Activated T-helper 1 cell treated with anti-CD3 and anti-CD28 coated beads, Interleukin-12 subunit alpha, Interleukin-12 subunit beta, Interleukin-2, Interleukin-4 antibody, amounts not matched to agents 30 ng/mL and 10 ng/mL and 1 ng/mL, durations not matched to agents 14 hours and 24 hours and 36 hours (primary cell): ENCODE measurements at regions of chrX and their contacts with region 1.

Region 1: DNA sequence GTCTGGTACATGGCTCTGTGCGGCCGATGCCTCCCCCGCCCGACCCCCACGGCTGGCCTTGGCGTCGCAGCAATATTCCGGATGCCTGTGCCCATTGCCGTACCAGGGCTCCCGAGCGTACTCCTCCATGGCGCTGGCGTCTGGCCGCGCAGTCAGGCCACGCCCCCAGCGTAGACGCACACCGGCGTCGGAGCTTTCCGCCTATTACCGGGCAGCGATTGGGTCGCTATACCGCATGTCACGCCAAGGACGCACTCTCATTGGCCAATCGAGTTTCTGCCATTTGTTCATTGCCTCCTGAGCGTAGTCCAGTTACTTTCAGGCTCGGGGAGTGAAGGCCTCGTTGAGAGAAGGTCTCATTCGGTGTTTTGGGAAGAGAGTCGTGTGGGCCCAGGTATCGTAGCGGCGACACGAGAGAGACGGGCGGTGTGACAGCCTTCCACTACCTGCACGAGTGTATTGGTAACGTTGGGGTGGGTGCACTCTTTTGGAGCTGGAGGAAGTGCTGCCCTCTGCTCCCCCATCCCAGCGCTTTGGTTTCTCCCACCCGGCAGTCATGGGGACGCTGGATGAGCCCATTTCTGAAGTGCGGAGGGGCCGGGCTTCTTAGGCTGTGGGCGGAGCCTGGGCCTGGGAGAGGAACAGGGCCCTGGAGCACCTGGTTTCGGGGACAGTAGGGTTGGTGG is at the starts of genes PQBP1 and TIMM17B:
- DNase-seq: peak; percentile 84
- H3K4me3 Mint-ChIP-seq: peak within 1 kb of the TSS; percentile 97
- H3K27ac Mint-ChIP-seq: peak within 1 kb of the TSS; percentile 100
- H3K4me1 Mint-ChIP-seq: peaks cover 8% of the 10 kb centered on the region
- H3K27me3 Mint-ChIP-seq: no peaks in the 10 kb centered on the region
- total RNA-seq, gene PQBP1: 112 and 119 TPM in 2 replicates
- total RNA-seq, gene TIMM17B: 72.2 and 72.3 TPM in 2 replicates

Region 2: DNA sequence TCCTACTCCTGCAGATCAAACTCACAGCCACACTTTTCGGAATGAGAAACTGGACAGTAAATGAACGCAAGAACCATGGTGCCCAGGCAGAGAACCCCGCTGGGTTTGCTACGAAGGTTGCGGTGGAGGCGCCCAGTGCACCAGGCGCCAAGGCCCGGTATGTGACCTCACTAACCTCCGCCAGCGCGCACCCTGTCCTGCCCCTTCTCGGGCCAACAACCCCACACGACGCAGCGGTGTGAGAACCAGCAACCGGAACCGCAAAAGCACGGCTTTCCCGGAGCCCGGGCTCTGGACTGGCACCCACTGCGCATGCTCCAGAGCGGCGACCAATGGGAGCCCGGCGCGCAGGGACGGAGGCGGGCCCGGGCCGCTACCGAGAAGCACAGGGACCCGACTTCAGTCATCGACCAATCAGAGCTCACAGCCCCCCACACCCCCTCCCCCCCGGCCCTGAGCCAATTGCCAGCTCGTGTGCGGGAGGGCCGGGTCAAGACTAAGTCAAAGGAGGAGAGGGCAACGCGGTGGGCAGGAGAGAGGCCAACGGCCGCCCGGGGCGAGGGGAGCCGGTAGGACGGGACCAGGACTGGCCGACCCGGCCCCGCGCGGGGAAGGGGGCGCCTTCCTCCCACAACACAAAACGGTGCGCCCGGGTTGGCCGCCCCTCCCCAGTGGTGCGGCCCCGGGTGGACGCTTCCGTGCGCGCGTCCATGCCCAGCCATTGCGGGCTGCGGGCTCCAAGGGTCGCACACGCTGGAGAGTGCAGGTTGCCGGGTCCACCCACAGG is 221.5 kb before region 1 on chrX:
- intact Hi-C with region 1: loop called (anchors 1 kb)
- DNase-seq: peak; percentile 87
- H3K4me3 Mint-ChIP-seq: peak overlapping the region; percentile 86
- H3K27ac Mint-ChIP-seq: peak overlapping the region; percentile 88
- H3K4me1 Mint-ChIP-seq: peaks cover 20% of the 10 kb centered on the region
- H3K27me3 Mint-ChIP-seq: no peaks in the 10 kb centered on the region

Region 3: DNA sequence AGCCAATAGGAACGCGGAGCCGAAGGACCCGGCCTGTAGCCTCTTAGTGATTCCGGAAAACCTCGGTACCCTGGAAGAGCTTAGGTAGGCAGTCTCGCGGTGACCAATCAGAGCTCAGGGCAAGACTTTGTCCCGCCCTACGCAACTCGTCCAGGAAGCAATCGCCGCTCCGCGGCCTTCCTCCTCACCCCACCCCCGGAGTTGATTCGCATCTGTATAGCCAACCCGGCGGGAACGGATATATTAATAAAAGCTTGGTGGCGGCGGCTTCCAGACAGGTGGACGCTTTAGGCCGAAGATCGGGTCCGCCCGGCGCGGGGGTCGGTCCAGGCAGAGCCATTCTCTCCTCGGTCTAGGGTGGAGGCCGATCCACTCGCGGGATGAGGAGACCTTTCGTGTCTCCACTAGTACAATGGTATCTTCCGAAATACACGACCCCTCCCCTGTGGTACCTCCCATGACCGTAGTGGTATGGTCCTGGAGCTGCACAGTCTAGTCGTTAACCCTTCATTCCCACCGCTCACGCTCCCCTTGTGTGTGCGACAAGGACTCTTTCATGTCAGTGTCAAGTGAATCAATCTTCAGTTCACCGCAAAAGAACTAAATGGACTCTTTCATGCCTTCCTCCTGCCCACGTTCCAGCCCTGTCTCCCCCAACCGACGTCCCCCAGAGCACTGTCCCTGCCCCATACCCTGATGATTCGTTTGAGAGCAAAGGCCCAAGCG is 160.4 kb before region 1 on chrX:
- intact Hi-C with region 1: loop called (anchors 1 kb)
- DNase-seq: peak; percentile 85
- H3K4me3 Mint-ChIP-seq: peak overlapping the region; percentile 98
- H3K27ac Mint-ChIP-seq: peak overlapping the region; percentile 98
- H3K4me1 Mint-ChIP-seq: peaks cover 23% of the 10 kb centered on the region
- H3K27me3 Mint-ChIP-seq: no peaks in the 10 kb centered on the region

Region 4: DNA sequence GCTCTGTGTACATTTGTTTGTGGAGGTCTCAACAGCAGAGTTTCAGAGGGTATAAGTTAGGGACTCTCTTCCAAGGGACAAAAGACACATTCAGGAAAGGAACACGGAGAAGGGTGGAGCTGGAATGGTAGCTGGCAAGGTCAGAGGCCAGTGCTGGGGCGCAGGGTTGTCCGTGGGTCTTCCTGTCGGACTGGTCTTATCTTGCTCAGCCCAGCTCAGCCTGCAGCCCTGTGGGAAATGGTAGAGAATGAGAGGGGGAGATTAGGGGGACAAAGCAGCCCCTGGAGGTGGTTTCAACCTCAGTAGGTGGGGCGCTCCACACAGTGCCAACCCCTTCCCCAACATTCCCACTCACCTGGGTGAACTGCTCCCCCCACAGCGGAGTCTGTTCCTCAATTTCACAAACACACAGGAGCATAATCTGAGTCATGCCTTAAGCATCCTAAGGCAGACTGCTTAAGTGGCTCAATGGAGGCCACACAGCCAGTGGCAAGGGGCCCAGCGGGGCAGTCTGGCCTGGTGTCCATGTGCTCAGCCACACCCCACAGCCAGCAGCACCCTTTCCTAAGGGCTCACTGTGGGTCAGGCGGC is 102.8 kb before region 1 on chrX:
- intact Hi-C with region 1: no loop called
- DNase-seq: no peak
- H3K4me3 Mint-ChIP-seq: no peak overlapping the region
- H3K27ac Mint-ChIP-seq: no peak overlapping the region
- H3K4me1 Mint-ChIP-seq: peaks cover under 1% of the 10 kb centered on the region
- H3K27me3 Mint-ChIP-seq: peaks cover 3% of the 10 kb centered on the region

Region 5: GRCh38 chrX:48937054-48937907 is 39.5 kb after region 1 on chrX:
- intact Hi-C with region 1: loop called (anchors 1 kb)
- DNase-seq: peak; percentile 85
- H3K4me3 Mint-ChIP-seq: peak overlapping the region; percentile 87
- H3K27ac Mint-ChIP-seq: peak overlapping the region; percentile 97
- H3K4me1 Mint-ChIP-seq: peaks cover 80% of the 10 kb centered on the region
- H3K27me3 Mint-ChIP-seq: no peaks in the 10 kb centered on the region

Region 6: GRCh38 chrX:49100704-49101628 is 203.2 kb after region 1 on chrX:
- intact Hi-C with region 1: loop called (anchors 5 kb)
- DNase-seq: peak; percentile 86
- H3K4me3 Mint-ChIP-seq: peak overlapping the region; percentile 90
- H3K27ac Mint-ChIP-seq: peak overlapping the region; percentile 87
- H3K4me1 Mint-ChIP-seq: no peaks in the 10 kb centered on the region
- H3K27me3 Mint-ChIP-seq: no peaks in the 10 kb centered on the region